ENCODE measurements at regions of chr1 and their contacts with region 1.

Region 1: GRCh38 chr1:12113433-12114339 is 50.6 kb downstream of the TNFRSF8 start:
- DNase-seq: no peak
- ATAC-seq: no peak
- H3K4me3 ChIP-seq: no peak overlapping the region
- H3K27ac ChIP-seq: no peak overlapping the region
- H3K4me1 ChIP-seq: no peaks in the 10 kb centered on the region
- H3K27me3 ChIP-seq: peaks cover 2 to 32% of the 10 kb centered on the region in 2 experiments; a peak in 4 of 5 replicates
- CTCF ChIP-seq: no peak
- EP300 ChIP-seq: no peak
- POLR2A ChIP-seq: no peak
- RAD21 ChIP-seq: no peak

Region 2: DNA sequence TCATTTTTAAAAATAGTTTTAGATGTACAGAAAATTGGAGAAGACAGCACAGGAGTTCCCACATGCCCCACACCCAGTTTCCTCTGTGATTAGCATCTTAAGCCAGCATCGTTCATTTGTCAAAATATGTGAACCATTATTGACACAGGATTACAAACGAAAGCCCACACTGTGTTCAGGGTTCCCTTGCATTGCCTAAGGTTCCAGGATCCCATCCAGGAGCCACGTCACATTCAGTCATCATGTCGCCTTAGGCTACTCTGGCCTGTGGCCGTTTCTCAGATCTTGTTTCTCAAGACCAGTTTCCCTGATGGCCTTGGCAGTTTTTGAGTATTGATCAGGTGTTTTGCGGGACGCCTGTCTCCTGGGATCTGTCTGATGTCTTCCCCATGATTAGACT is 18.4 kb after region 1 on chr1:
- CTCF ChIA-PET with region 1: no interaction called
- POLR2A ChIA-PET with region 1: no interaction called
- in situ Hi-C with region 1: no loop called
- intact Hi-C with region 1: loop called (anchors 1 kb)
- DNase-seq: no peak
- ATAC-seq: no peak
- H3K4me3 ChIP-seq: no peak overlapping the region
- H3K27ac ChIP-seq: no peak overlapping the region
- H3K4me1 ChIP-seq: peaks cover 25% of the 10 kb centered on the region
- H3K27me3 ChIP-seq: peaks cover 0 to 21% of the 10 kb centered on the region in 2 experiments; a peak in 4 of 5 replicates
- CTCF ChIP-seq: no peak
- EP300 ChIP-seq: no peak
- POLR2A ChIP-seq: no peak
- RAD21 ChIP-seq: no peak

Region 3: GRCh38 chr1:12208764-12209494 is 95.2 kb after region 1 on chr1:
- CTCF ChIA-PET with region 1: interaction called, 13 read pairs
- POLR2A ChIA-PET with region 1: no interaction called
- in situ Hi-C with region 1: no loop called
- intact Hi-C with region 1: no loop called
- DNase-seq: peak; percentile 56
- ATAC-seq: peak; percentile 93
- H3K4me3 ChIP-seq: no peak overlapping the region
- H3K27ac ChIP-seq: no peak overlapping the region
- H3K4me1 ChIP-seq: no peaks in the 10 kb centered on the region
- H3K27me3 ChIP-seq: no peaks in the 10 kb centered on the region
- CTCF ChIP-seq: peak; percentile 94
- EP300 ChIP-seq: no peak
- POLR2A ChIP-seq: no peak
- RAD21 ChIP-seq: peak; percentile 92

Measured in HepG2 (cell line).